HepG2 (cell line): ENCODE measurements at regions of chr5 and their contacts with region 1.

Region 1: DNA sequence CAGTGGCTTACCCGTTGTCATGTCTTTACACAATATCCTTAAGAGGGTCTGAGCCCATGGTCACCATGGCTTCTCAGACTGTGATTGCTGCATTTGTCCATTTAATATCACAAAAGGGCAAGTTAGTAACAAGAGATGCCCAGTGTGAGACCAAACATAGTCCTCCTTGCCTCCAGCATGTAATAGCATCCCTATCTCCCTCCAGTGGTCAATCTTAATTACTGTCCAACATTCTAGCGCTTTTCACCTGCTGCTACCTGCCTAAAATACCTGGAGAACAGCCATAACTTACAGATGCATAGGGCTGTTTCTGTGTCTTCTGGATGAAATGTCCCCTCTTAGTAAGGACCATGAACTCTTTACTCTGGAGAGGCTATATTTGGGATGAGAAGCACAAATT is 267.2 kb upstream of the DAB2 start:
- DNase-seq: no peak
- ATAC-seq: peak; percentile 79
- H3K4me3 ChIP-seq: no peak overlapping the region
- H3K27ac ChIP-seq: no peak overlapping the region
- H3K4me1 ChIP-seq: no peaks in the 10 kb centered on the region
- H3K27me3 ChIP-seq: no peaks in the 10 kb centered on the region
- CTCF ChIP-seq: peak; percentile 40; the same call in 1 of the 2 replicates
- EP300 ChIP-seq: no peak
- POLR2A ChIP-seq: no peak
- RAD21 ChIP-seq: no peak; the same call in 1 of the 2 replicates

Region 2: GRCh38 chr5:39578887-39579497 is 113.0 kb before region 1 on chr5:
- CTCF ChIA-PET with region 1: no interaction called
- POLR2A ChIA-PET with region 1: no interaction called
- in situ Hi-C with region 1: no loop called
- intact Hi-C with region 1: loop called (anchors 2 kb)
- DNase-seq: no peak
- ATAC-seq: no peak
- H3K4me3 ChIP-seq: no peak overlapping the region
- H3K27ac ChIP-seq: no peak overlapping the region
- H3K4me1 ChIP-seq: no peaks in the 10 kb centered on the region
- H3K27me3 ChIP-seq: no peaks in the 10 kb centered on the region
- CTCF ChIP-seq: no peak
- EP300 ChIP-seq: no peak
- POLR2A ChIP-seq: no peak
- RAD21 ChIP-seq: no peak

Region 3: DNA sequence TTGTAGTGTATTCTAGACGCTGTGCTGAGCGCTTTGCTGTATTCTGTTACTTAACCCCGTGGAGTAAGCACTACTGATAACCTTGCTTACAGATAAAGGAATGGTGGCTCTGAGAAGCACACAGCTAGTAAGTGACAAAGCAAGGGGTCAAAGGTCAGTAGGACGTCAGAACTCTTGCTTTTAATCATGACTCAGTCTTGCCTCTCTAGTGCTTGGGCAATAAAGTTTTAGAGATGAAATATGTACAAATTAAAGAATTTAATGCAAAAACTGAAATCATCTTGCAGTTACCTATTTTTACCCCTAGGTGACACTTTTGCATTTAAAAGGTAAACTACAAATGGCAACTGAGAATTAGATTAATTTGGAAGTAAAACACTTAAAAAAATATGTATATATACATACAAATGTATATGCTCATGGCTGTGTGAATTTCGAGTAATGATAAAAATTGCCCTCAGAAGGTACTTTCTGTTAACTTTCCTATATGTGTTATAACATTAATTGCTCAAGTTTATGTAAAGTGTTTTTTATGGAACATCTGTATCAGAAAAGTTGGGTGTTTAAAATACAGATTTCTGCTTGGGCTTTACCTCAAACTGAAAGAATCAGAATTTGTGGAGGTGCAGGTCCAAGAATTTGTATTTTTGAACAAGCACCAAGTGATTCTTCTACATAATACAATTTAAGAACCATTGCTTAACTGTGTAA is 92.1 kb before region 1 on chr5:
- CTCF ChIA-PET with region 1: interaction called, 8 read pairs
- POLR2A ChIA-PET with region 1: no interaction called
- in situ Hi-C with region 1: loop called (anchors 10 kb)
- intact Hi-C with region 1: loop called (anchors 1 kb)
- DNase-seq: no peak
- ATAC-seq: peak; percentile 45; the same call in 2 of the 3 replicates
- H3K4me3 ChIP-seq: no peak overlapping the region
- H3K27ac ChIP-seq: no peak overlapping the region
- H3K4me1 ChIP-seq: no peaks in the 10 kb centered on the region
- H3K27me3 ChIP-seq: no peaks in the 10 kb centered on the region
- CTCF ChIP-seq: peak; percentile 38
- EP300 ChIP-seq: no peak
- POLR2A ChIP-seq: no peak
- RAD21 ChIP-seq: no peak

Region 4: DNA sequence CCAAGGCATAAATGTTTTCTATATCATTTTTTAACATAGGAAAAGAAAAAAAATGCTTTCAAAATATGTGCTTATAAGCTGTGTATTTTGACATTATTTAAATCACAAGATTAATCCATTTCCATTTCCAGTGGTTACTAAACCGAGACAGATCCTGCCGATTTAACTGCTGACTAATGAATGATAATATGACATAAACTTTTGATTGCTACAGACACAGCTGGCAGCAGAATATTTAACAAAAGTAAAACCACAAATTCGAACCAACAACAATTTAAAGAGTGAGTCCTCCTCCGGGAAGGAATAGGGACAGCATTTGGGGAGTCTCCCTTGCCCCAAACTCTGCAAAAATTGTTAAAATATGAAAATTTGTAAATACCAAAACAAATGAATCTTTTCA is 134.1 kb after region 1 on chr5:
- CTCF ChIA-PET with region 1: no interaction called
- POLR2A ChIA-PET with region 1: no interaction called
- in situ Hi-C with region 1: no loop called
- intact Hi-C with region 1: no loop called
- DNase-seq: no peak
- ATAC-seq: no peak
- H3K4me3 ChIP-seq: no peak overlapping the region
- H3K27ac ChIP-seq: no peak overlapping the region
- H3K4me1 ChIP-seq: no peaks in the 10 kb centered on the region
- H3K27me3 ChIP-seq: no peaks in the 10 kb centered on the region
- CTCF ChIP-seq: no peak
- EP300 ChIP-seq: no peak
- POLR2A ChIP-seq: no peak
- RAD21 ChIP-seq: no peak